H1 (cell line): ENCODE measurements at regions of chr6 and their contacts with region 1.

Region 1: DNA sequence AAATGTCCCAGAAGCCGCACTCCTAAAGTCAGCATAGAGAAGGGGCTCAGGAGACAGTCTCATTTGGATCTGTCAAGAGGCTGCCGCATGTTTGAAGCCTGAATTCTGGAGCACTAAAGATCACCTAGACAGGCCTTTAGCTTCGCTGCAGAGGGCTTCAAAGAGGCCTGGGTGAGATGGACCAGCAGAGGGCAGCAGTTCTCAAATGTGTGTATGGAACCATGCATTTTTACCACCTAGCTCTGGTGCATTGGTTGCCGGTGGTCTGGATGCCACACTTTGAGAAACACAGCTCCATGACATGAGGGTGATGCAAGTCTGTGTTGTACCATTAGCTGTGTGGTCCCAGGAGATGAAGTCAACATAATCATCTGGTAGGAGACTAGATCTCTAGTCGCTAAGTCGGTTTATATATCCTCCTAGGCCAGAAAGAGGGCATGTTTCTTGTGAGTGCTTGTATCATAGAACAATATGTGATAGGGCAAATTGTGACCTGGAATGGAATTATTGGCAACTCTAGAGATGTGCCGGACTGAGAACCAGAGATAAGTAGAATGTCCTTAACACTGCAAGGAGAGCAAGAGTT is 64.8 kb downstream of the KIAA0319 start:
- DNase-seq: peak; percentile 54 to 88
- H3K4me3 ChIP-seq: no peak overlapping the region
- H3K27ac ChIP-seq: no peak overlapping the region
- H3K4me1 ChIP-seq: peaks cover 0 to 2% (median 0%) of the 10 kb centered on the region in 4 experiments; a peak in 1 of 7 replicates
- H3K27me3 ChIP-seq: no peaks in the 10 kb centered on the region
- CTCF ChIP-seq: peak; percentile 68 to 91 (median 86)
- EP300 ChIP-seq: no peak
- POLR2A ChIP-seq: no peak
- RAD21 ChIP-seq: peak; percentile 80 to 88

Region 2: GRCh38 chr6:24394780-24395437 is 186.3 kb before region 1 on chr6:
- CTCF ChIA-PET with region 1: no interaction called
- POLR2A ChIA-PET with region 1: no interaction called
- DNase-seq: no peak
- H3K4me3 ChIP-seq: no peak overlapping the region
- H3K27ac ChIP-seq: no peak overlapping the region
- H3K4me1 ChIP-seq: peaks cover 0 to 5% (median 3%) of the 10 kb centered on the region in 4 experiments; a peak in 3 of 7 replicates
- H3K27me3 ChIP-seq: no peaks in the 10 kb centered on the region
- CTCF ChIP-seq: no peak
- EP300 ChIP-seq: no peak
- POLR2A ChIP-seq: no peak
- RAD21 ChIP-seq: no peak

Region 3: DNA sequence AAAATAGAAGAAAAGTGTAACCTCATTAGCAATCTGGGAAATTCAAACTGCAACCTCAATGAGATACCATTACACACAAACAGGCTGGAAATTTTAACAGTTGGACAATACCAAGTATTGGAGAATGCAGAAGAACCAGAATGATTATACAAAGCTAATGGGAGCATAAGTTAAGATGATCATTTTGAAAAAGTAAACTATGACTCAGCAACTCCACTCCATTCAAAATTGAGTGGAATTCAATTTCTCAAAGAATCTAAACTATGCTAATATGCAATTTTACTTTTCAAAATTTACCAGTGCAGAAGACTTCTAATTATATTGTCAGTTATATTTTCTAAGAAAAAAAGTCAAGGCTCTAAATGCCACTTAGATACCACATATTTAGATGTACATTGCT is 109.0 kb before region 1 on chr6:
- CTCF ChIA-PET with region 1: no interaction called
- POLR2A ChIA-PET with region 1: no interaction called
- DNase-seq: no peak
- H3K4me3 ChIP-seq: no peak overlapping the region
- H3K27ac ChIP-seq: no peak overlapping the region
- H3K4me1 ChIP-seq: no peaks in the 10 kb centered on the region
- H3K27me3 ChIP-seq: no peaks in the 10 kb centered on the region
- CTCF ChIP-seq: no peak
- EP300 ChIP-seq: no peak
- POLR2A ChIP-seq: no peak
- RAD21 ChIP-seq: no peak

Region 4: DNA sequence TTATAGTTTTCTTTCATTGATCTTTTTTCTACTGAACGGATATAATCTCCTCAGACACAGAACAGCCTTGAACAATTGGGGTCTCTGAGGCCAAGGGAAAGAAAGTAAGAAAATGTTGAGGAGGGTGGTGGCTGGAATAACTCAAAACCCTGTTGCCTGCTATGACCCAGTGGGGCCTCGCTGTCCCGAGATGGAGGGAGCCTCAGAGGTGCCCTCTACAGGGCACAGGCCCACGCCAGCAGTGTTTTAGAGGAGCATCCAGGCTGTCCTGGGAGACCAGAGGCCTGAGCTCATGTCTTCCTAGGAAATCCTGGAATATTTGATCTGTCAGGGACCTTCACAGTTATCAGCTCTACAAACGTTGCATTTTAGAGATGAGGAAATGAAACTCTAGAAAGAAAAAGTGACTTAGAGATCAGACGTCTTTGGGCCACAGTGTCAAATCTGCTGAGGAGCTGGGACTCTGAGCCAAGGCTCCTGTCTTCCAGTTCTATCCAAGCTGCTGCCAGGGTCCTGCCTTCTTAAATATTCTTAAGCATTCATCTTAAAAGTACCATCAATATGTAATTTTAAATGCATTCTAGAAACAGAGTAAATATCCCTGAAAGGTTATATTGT is 60.1 kb before region 1 on chr6:
- CTCF ChIA-PET with region 1: interaction called, 99 read pairs
- POLR2A ChIA-PET with region 1: no interaction called
- DNase-seq: peak; percentile 25 to 70
- H3K4me3 ChIP-seq: no peak overlapping the region
- H3K27ac ChIP-seq: no peak overlapping the region
- H3K4me1 ChIP-seq: no peaks in the 10 kb centered on the region
- H3K27me3 ChIP-seq: no peaks in the 10 kb centered on the region
- CTCF ChIP-seq: peak; percentile 88 to 93 (median 89)
- EP300 ChIP-seq: no peak
- POLR2A ChIP-seq: no peak
- RAD21 ChIP-seq: peak; percentile 55 to 74

Region 5: GRCh38 chr6:24566020-24566767 is 15.0 kb before region 1 on chr6:
- CTCF ChIA-PET with region 1: interaction called, 18 read pairs
- POLR2A ChIA-PET with region 1: no interaction called
- DNase-seq: no peak
- H3K4me3 ChIP-seq: no peak overlapping the region
- H3K27ac ChIP-seq: no peak overlapping the region
- H3K4me1 ChIP-seq: no peaks in the 10 kb centered on the region
- H3K27me3 ChIP-seq: no peaks in the 10 kb centered on the region
- CTCF ChIP-seq: no peak
- EP300 ChIP-seq: no peak
- POLR2A ChIP-seq: no peak
- RAD21 ChIP-seq: no peak

Region 6: GRCh38 chr6:24600903-24601302 is 19.7 kb after region 1 on chr6:
- CTCF ChIA-PET with region 1: interaction called, 21 read pairs
- POLR2A ChIA-PET with region 1: interaction called, 3 read pairs
- DNase-seq: peak in 1 of 2 experiments; percentile 76
- H3K4me3 ChIP-seq: no peak overlapping the region
- H3K27ac ChIP-seq: no peak overlapping the region
- H3K4me1 ChIP-seq: no peaks in the 10 kb centered on the region
- H3K27me3 ChIP-seq: no peaks in the 10 kb centered on the region
- CTCF ChIP-seq: peak; percentile 67 to 85 (median 79)
- EP300 ChIP-seq: no peak
- POLR2A ChIP-seq: no peak
- RAD21 ChIP-seq: peak; percentile 72 to 80

Region 7: GRCh38 chr6:24621626-24622289 is 40.6 kb after region 1 on chr6:
- CTCF ChIA-PET with region 1: interaction called, 12 read pairs
- POLR2A ChIA-PET with region 1: no interaction called
- DNase-seq: no peak
- H3K4me3 ChIP-seq: no peak overlapping the region
- H3K27ac ChIP-seq: no peak overlapping the region
- H3K4me1 ChIP-seq: no peaks in the 10 kb centered on the region
- H3K27me3 ChIP-seq: no peaks in the 10 kb centered on the region
- CTCF ChIP-seq: no peak
- EP300 ChIP-seq: no peak
- POLR2A ChIP-seq: no peak
- RAD21 ChIP-seq: no peak

Region 8: DNA sequence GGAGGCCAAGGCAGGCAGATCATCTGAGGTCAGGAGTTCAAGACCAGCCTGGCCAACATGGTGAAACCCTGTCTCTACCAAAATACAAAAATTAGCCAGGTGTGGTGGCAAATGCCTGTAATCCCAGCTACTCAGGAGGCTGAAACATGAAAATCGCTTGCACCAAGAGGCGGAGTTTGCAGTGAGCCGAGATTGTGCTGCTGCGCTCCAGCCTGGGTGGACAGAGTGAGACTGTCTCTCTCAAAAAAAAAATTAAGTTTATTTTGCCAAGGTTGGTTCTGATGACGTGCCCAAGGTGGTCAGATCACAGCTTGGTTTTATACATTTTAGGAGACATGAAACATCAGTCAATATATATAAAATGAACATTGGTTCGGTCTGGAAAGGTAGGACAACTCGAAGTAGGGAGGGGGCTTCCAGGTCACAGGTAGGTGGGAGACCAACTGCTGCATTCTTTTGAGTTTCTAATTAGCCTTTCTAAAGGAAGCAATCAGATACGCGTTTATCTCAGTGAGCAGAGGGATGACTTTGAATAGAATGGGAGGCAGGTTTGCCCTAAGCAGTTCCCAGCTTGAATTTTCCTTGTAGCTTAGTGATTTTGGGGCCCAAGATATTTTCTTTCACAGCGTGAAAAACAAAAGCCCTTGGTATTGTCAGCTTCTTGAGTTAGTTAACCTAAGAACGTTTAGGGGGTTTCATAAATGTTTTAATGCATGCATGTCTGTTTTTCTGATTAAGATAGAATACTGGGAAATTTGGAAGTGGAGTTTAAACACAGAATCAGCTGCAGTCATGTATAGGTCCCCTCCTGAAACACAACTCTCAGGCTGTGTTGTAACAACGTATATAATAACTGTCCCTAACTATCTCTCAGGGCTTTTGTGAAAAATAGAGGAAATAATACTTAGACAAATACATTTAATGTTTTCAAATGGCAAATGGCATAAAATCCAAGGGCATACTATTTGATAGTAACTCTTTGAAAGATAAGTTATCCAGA is 102.4 kb after region 1 on chr6:
- CTCF ChIA-PET with region 1: interaction called, 13 read pairs
- POLR2A ChIA-PET with region 1: interaction called, 5 read pairs
- DNase-seq: no peak
- H3K4me3 ChIP-seq: peak overlapping the region in 1 of 4 experiments; percentile 46; a peak in 2 of 8 replicates
- H3K27ac ChIP-seq: no peak overlapping the region
- H3K4me1 ChIP-seq: peaks cover 3 to 19% (median 8%) of the 10 kb centered on the region in 4 experiments; a peak in 6 of 7 replicates
- H3K27me3 ChIP-seq: peaks cover 0 to 5% (median 0%) of the 10 kb centered on the region in 4 experiments; a peak in 1 of 7 replicates
- CTCF ChIP-seq: no peak
- EP300 ChIP-seq: peak in 1 of 2 experiments; percentile 51; a peak in 1 of 3 replicates
- POLR2A ChIP-seq: no peak
- RAD21 ChIP-seq: no peak

Region 9: GRCh38 chr6:24702720-24703282 is 121.6 kb after region 1 on chr6:
- CTCF ChIA-PET with region 1: interaction called, 17 read pairs
- POLR2A ChIA-PET with region 1: interaction called, 9 read pairs
- DNase-seq: no peak
- H3K4me3 ChIP-seq: no peak overlapping the region
- H3K27ac ChIP-seq: no peak overlapping the region
- H3K4me1 ChIP-seq: no peaks in the 10 kb centered on the region
- H3K27me3 ChIP-seq: no peaks in the 10 kb centered on the region
- CTCF ChIP-seq: no peak
- EP300 ChIP-seq: no peak
- POLR2A ChIP-seq: no peak
- RAD21 ChIP-seq: no peak